Sigmoid colon (tissue), 7 donors: ENCODE measurements at regions of chr3 and their contacts with region 1.

Region 1: DNA sequence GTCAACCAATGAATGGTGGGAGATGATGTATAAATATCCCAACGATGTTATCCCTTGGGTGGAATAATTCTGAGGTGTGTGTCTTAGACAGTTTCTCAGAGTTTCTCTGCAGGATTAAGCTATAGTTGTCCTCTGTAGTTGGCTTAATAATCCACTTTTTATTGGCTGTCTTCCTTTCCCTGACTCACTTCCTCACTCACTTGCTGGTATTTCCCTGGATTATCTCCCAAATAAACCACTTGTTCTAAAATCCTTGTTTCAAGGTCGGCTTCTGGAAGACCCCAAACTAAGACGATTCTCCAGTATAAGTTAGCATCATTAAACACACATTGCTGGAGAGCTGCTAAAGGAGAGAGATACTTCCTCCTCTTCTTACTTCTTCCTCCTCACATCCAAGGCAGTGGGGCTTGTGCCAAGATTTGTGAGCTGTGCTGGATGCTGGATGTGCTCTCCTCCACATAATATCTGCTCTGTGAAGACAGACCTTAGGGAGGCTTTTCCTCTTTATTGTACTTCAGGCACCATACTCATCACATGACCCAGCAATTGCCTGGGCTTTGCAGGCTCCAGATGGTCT is 22.5 kb upstream of the ROPN1 start:
- DNase-seq: no peak
- H3K4me3 ChIP-seq: no peak overlapping the region
- H3K27ac ChIP-seq: no peak overlapping the region
- H3K4me1 ChIP-seq: peaks cover 0 to 5% (median 0%) of the 10 kb centered on the region in 4 donors
- H3K27me3 ChIP-seq: no peaks in the 10 kb centered on the region
- CTCF ChIP-seq: no peak
- EP300 ChIP-seq: no peak
- POLR2A ChIP-seq: no peak

Region 2: GRCh38 chr3:124078953-124079911 is 64.8 kb after region 1 on chr3:
- intact Hi-C with region 1: loop called (anchors 2 kb)
- DNase-seq: no peak
- H3K4me3 ChIP-seq: no peak overlapping the region
- H3K27ac ChIP-seq: no peak overlapping the region
- H3K4me1 ChIP-seq: no peaks in the 10 kb centered on the region
- H3K27me3 ChIP-seq: no peaks in the 10 kb centered on the region
- CTCF ChIP-seq: peak in 3 of 4 experiments; percentile 37 to 68 (median 63)
- EP300 ChIP-seq: no peak
- POLR2A ChIP-seq: no peak

Region 3: GRCh38 chr3:124467980-124468902 is 453.8 kb after region 1 on chr3:
- intact Hi-C with region 1: loop called (anchors 2 kb)
- DNase-seq: no peak
- H3K4me3 ChIP-seq: no peak overlapping the region
- H3K27ac ChIP-seq: no peak overlapping the region
- H3K4me1 ChIP-seq: no peaks in the 10 kb centered on the region
- H3K27me3 ChIP-seq: no peaks in the 10 kb centered on the region
- CTCF ChIP-seq: peak; percentile 39 to 92 (median 88)
- EP300 ChIP-seq: no peak
- POLR2A ChIP-seq: no peak

Region 4: GRCh38 chr3:124552239-124552638 is 537.8 kb after region 1 on chr3:
- intact Hi-C with region 1: loop called (anchors 5 kb)
- DNase-seq: no peak
- H3K4me3 ChIP-seq: no peak overlapping the region
- H3K27ac ChIP-seq: no peak overlapping the region
- H3K4me1 ChIP-seq: peaks cover 0 to 5% (median under 1%) of the 10 kb centered on the region in 4 donors
- H3K27me3 ChIP-seq: no peaks in the 10 kb centered on the region
- CTCF ChIP-seq: no peak
- EP300 ChIP-seq: no peak
- POLR2A ChIP-seq: no peak